Caco-2 (cell line): ENCODE measurements at regions of chr17 and their contacts with region 1.

Region 1: DNA sequence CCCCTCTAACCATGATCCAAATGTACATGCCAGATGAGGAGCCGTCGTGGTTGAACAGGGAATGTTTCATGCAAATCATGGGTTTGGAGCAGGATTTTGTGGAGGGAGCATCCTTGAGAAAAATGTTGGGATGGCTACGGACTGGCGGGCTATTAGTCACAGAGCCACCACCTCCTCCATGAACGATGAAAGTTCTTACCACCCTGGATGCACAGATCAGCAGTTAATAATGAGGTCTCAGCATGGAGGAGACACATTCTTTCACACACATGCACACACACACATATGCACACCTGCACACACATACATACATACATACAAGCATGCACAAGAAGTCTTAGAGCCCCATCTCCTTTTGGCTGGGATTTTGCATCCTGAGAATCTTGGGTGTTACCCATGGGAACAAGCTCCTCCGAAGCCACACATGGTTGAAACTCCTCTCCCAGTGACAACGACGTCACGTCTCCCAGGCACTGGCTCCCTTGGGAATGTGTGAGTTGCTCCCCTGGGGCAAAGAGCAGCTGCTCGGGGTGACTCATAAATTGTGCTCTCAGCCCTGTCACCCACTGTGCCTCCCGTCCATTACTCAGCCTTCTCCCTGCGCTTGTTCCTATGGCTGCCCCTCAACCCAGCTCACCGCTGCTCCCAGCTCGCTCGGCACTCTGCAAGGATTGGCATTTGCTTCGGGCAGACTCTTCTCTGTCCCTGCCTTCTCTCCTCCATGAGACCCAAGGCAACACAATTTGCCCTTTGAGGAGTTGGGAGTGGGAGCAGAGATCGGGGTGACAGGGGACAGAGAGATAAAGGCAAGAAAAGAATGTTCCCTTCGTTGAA is 344.6 kb downstream of the SOX9 start:
- DNase-seq: peak; percentile 87 to 94
- H3K4me3 ChIP-seq: peak overlapping the region; percentile 22
- H3K4me3 Mint-ChIP-seq: peak overlapping the region; percentile 85
- H3K27ac Mint-ChIP-seq: no peak overlapping the region
- H3K4me1 ChIP-seq: peaks cover 51% of the 10 kb centered on the region
- H3K4me1 Mint-ChIP-seq: peaks cover 41% of the 10 kb centered on the region
- H3K27me3 ChIP-seq: no peaks in the 10 kb centered on the region
- H3K27me3 Mint-ChIP-seq: no peaks in the 10 kb centered on the region
- CTCF ChIP-seq: no peak

Region 2: DNA sequence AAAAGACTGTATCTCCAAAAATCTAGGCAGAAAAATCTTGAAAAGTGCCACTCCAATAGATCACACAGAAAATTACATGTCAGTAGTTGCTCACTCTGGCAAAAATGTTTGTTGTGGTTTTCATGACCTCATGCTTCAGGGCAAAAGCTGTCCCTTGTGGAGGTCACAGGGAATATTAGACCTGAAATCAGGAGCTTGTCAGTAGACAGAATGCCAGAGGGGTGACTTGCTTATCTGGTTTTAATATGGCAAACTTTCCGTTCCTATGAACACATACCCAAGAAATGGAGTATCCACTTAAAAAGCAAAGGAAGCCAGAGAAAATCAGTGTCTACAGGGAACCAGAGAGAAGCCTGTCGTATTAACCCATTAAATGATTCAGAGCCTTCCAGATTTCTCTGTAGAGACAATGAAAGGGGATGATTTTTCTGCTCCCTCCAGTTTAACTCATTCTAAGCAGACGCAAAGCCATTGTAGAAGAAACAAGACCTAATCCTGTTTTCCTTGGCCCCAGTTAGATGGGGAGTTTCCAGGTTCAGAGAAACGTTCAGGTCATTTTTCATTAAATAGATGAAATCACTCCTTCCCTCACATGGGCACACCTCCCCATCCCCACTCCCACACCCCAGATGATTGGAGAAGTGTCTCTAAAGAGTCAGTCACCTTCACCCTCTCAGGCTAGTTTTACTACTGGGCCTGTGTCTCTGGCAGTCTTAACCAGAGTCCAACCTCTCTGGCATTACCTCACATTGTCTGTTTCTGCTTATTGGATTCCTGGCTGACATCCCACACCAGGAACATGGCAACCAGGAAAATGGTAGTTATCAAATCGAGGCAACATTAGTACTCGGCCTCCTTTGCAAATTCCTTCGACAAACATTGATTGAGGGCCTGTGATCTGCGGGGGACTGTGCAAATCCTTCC is 338.6 kb before region 1 on chr17:
- CTCF ChIA-PET with region 1: no interaction called
- POLR2A ChIA-PET with region 1: no interaction called
- intact Hi-C with region 1: loop called (anchors 1 kb)
- DNase-seq: peak in 1 of 2 experiments; percentile 30
- H3K4me3 ChIP-seq: no peak overlapping the region
- H3K4me3 Mint-ChIP-seq: no peak overlapping the region
- H3K27ac Mint-ChIP-seq: no peak overlapping the region
- H3K4me1 ChIP-seq: peaks cover 21% of the 10 kb centered on the region
- H3K4me1 Mint-ChIP-seq: peaks cover 19% of the 10 kb centered on the region
- H3K27me3 ChIP-seq: no peaks in the 10 kb centered on the region
- H3K27me3 Mint-ChIP-seq: no peaks in the 10 kb centered on the region
- CTCF ChIP-seq: no peak

Region 3: GRCh38 chr17:72342627-72343527 is 122.5 kb before region 1 on chr17:
- CTCF ChIA-PET with region 1: no interaction called
- POLR2A ChIA-PET with region 1: no interaction called
- intact Hi-C with region 1: no loop called
- DNase-seq: no peak
- H3K4me3 ChIP-seq: no peak overlapping the region
- H3K4me3 Mint-ChIP-seq: no peak overlapping the region
- H3K27ac Mint-ChIP-seq: no peak overlapping the region
- H3K4me1 ChIP-seq: peaks cover 21% of the 10 kb centered on the region
- H3K4me1 Mint-ChIP-seq: peaks cover 30% of the 10 kb centered on the region
- H3K27me3 ChIP-seq: no peaks in the 10 kb centered on the region
- H3K27me3 Mint-ChIP-seq: no peaks in the 10 kb centered on the region
- CTCF ChIP-seq: no peak

Region 4: GRCh38 chr17:72404872-72405271 is 60.5 kb before region 1 on chr17:
- CTCF ChIA-PET with region 1: interaction called, 6 read pairs
- POLR2A ChIA-PET with region 1: no interaction called
- intact Hi-C with region 1: loop called (anchors 2 kb)
- DNase-seq: no peak
- H3K4me3 ChIP-seq: no peak overlapping the region
- H3K4me3 Mint-ChIP-seq: no peak overlapping the region
- H3K27ac Mint-ChIP-seq: peak overlapping the region; percentile 97
- H3K4me1 ChIP-seq: peaks cover 93% of the 10 kb centered on the region
- H3K4me1 Mint-ChIP-seq: peaks cover 60% of the 10 kb centered on the region
- H3K27me3 ChIP-seq: no peaks in the 10 kb centered on the region
- H3K27me3 Mint-ChIP-seq: no peaks in the 10 kb centered on the region
- CTCF ChIP-seq: no peak

Region 5: GRCh38 chr17:72411124-72411563 is 54.3 kb before region 1 on chr17:
- CTCF ChIA-PET with region 1: no interaction called
- POLR2A ChIA-PET with region 1: no interaction called
- intact Hi-C with region 1: loop called (anchors 2 kb)
- DNase-seq: no peak
- H3K4me3 ChIP-seq: no peak overlapping the region
- H3K4me3 Mint-ChIP-seq: no peak overlapping the region
- H3K27ac Mint-ChIP-seq: peak overlapping the region; percentile 77
- H3K4me1 ChIP-seq: peaks cover 79% of the 10 kb centered on the region
- H3K4me1 Mint-ChIP-seq: peaks cover 50% of the 10 kb centered on the region
- H3K27me3 ChIP-seq: no peaks in the 10 kb centered on the region
- H3K27me3 Mint-ChIP-seq: no peaks in the 10 kb centered on the region
- CTCF ChIP-seq: no peak

Region 6: GRCh38 chr17:72421128-72422092 is 44.0 kb before region 1 on chr17:
- CTCF ChIA-PET with region 1: no interaction called
- POLR2A ChIA-PET with region 1: no interaction called
- intact Hi-C with region 1: loop called (anchors 2 kb)
- DNase-seq: peak; percentile 85 to 92
- H3K4me3 ChIP-seq: no peak overlapping the region
- H3K4me3 Mint-ChIP-seq: peak overlapping the region; percentile 29
- H3K27ac Mint-ChIP-seq: peak overlapping the region; percentile 97
- H3K4me1 ChIP-seq: peaks cover 43% of the 10 kb centered on the region
- H3K4me1 Mint-ChIP-seq: peaks cover 42% of the 10 kb centered on the region
- H3K27me3 ChIP-seq: no peaks in the 10 kb centered on the region
- H3K27me3 Mint-ChIP-seq: no peaks in the 10 kb centered on the region
- CTCF ChIP-seq: no peak

Region 7: GRCh38 chr17:72445055-72445991 is 20.1 kb before region 1 on chr17:
- CTCF ChIA-PET with region 1: no interaction called
- POLR2A ChIA-PET with region 1: interaction called, 4 read pairs
- intact Hi-C with region 1: loop called (anchors 2 kb)
- DNase-seq: peak; percentile 74 to 80
- H3K4me3 ChIP-seq: no peak overlapping the region
- H3K4me3 Mint-ChIP-seq: peak overlapping the region; percentile 53
- H3K27ac Mint-ChIP-seq: peak overlapping the region; percentile 94
- H3K4me1 ChIP-seq: peaks cover 72% of the 10 kb centered on the region
- H3K4me1 Mint-ChIP-seq: peaks cover 49% of the 10 kb centered on the region
- H3K27me3 ChIP-seq: no peaks in the 10 kb centered on the region
- H3K27me3 Mint-ChIP-seq: no peaks in the 10 kb centered on the region
- CTCF ChIP-seq: no peak

Region 8: GRCh38 chr17:72515291-72516065 is 50.1 kb after region 1 on chr17:
- CTCF ChIA-PET with region 1: no interaction called
- POLR2A ChIA-PET with region 1: interaction called, 5 read pairs
- intact Hi-C with region 1: loop called (anchors 1 kb)
- DNase-seq: no peak
- H3K4me3 ChIP-seq: no peak overlapping the region
- H3K4me3 Mint-ChIP-seq: no peak overlapping the region
- H3K27ac Mint-ChIP-seq: no peak overlapping the region
- H3K4me1 ChIP-seq: peaks cover 46% of the 10 kb centered on the region
- H3K4me1 Mint-ChIP-seq: peaks cover 27% of the 10 kb centered on the region
- H3K27me3 ChIP-seq: no peaks in the 10 kb centered on the region
- H3K27me3 Mint-ChIP-seq: no peaks in the 10 kb centered on the region
- CTCF ChIP-seq: no peak